CD4-positive, alpha-beta memory T cell (primary cell): ENCODE measurements at regions of chr7 and their contacts with region 1.

Region 1: DNA sequence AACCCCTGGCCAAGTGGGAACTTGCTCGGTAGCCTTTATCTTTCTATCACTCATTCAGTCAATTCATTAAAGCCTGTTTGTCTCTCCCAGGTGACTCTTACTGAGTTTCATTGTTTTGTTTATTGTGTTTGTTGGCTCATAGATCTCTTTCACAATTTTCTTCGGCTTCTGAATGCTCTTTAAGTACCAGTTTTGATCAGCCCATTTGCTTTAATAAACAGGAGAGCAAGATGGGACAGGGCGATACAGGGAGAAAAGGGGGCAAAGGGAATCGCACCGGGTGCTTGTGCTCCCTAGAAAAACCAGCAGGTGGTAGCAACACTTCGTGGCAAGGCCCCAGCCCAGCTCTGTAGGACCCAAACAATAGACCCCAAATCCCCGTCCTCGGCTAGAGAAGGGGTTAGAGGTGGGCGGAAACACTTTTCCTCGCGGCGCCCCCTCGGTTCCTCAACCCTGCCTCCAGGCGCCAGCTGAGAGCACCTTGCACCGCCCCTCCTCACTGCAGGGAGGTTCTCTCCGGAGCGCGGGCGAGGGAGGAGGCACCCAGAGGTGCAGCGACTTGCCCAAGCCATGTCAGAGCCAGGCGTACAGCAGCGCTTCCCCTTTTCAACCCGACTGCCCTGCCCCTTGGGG is 1.0 kb upstream of the EPHB6 start:
- DNase-seq: peak; percentile 63 to 72 (median 71)
- H3K4me3 ChIP-seq: peak overlapping the region; percentile 81 to 90
- H3K4me3 Mint-ChIP-seq: peak overlapping the region; percentile 93 to 98 (median 97)
- H3K27ac ChIP-seq: peak overlapping the region; percentile 27
- H3K27ac Mint-ChIP-seq: peak overlapping the region; percentile 86 to 96 (median 92)
- H3K4me1 ChIP-seq: peaks cover 24% of the 10 kb centered on the region
- H3K4me1 Mint-ChIP-seq: peaks cover 12 to 34% (median 19%) of the 10 kb centered on the region in 4 donors
- H3K27me3 ChIP-seq: no peaks in the 10 kb centered on the region
- H3K27me3 Mint-ChIP-seq: peaks cover 3% of the 10 kb centered on the region in 2 donors

Region 2: GRCh38 chr7:142598297-142598696 is 255.6 kb before region 1 on chr7:
- CTCF ChIA-PET with region 1: no interaction called
- POLR2A ChIA-PET with region 1: no interaction called
- intact Hi-C with region 1: no loop called
- DNase-seq: no peak
- H3K4me3 ChIP-seq: no peak overlapping the region
- H3K4me3 Mint-ChIP-seq: no peak overlapping the region
- H3K27ac ChIP-seq: no peak overlapping the region
- H3K27ac Mint-ChIP-seq: peak overlapping the region in 1 of 7 donors; percentile 62
- H3K4me1 ChIP-seq: no peaks in the 10 kb centered on the region
- H3K4me1 Mint-ChIP-seq: no peaks in the 10 kb centered on the region
- H3K27me3 ChIP-seq: no peaks in the 10 kb centered on the region
- H3K27me3 Mint-ChIP-seq: peaks cover 0 to 2% of the 10 kb centered on the region in 2 donors

Region 3: DNA sequence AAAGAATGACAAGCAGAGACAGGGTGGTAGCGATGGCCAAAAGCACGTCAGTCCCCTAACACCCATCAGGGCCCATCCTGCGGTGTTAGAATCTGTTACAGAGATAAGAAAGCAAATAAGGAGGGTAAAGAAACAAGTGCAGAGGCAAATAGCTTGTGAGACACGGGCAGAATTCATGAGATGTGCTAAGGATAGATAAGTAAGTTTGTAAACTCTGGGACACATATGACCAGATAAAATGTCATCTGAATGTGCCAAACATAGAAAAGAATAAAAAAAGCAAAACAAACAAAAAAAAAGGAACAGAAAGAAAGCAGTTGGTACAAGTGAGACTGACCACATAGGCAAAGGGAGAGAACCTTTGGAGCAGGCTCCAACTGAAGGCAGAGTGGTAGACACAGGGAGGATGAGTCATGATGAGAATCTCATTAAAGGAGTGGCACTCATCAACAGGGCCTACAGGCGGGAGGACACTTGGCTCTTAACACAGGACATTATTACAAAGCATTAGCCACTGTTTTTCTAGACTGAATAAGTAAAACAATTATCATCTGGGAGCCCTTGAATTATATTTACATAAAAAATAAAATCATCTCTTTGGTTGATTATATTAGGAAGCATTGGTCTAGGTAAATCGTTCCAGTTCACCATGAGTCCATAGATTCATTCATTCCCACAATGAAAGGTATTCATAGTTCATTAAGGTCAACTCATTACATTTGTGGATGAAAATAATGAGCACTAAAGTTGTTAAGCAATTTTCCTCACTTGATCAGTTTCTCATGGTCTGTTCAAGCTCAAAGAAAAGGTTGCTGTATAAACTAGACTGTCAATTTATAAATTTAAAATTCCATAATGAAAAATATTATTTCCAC is 20.4 kb before region 1 on chr7:
- CTCF ChIA-PET with region 1: no interaction called
- POLR2A ChIA-PET with region 1: no interaction called
- intact Hi-C with region 1: loop called (anchors 2 kb)
- DNase-seq: no peak
- H3K4me3 ChIP-seq: no peak overlapping the region
- H3K4me3 Mint-ChIP-seq: no peak overlapping the region
- H3K27ac ChIP-seq: no peak overlapping the region
- H3K27ac Mint-ChIP-seq: peak overlapping the region in 2 of 7 donors; percentile 5 to 30
- H3K4me1 ChIP-seq: no peaks in the 10 kb centered on the region
- H3K4me1 Mint-ChIP-seq: peaks cover 6 to 11% (median 6%) of the 10 kb centered on the region in 4 donors
- H3K27me3 ChIP-seq: no peaks in the 10 kb centered on the region
- H3K27me3 Mint-ChIP-seq: no peaks in the 10 kb centered on the region

Region 4: GRCh38 chr7:142866361-142867058 is 12.7 kb after region 1 on chr7:
- CTCF ChIA-PET with region 1: interaction called, 31 read pairs
- POLR2A ChIA-PET with region 1: interaction called, 7 read pairs
- intact Hi-C with region 1: loop called (anchors 1 kb)
- DNase-seq: peak in 1 of 5 donors; percentile 19
- H3K4me3 ChIP-seq: no peak overlapping the region
- H3K4me3 Mint-ChIP-seq: no peak overlapping the region
- H3K27ac ChIP-seq: no peak overlapping the region
- H3K27ac Mint-ChIP-seq: no peak overlapping the region
- H3K4me1 ChIP-seq: no peaks in the 10 kb centered on the region
- H3K4me1 Mint-ChIP-seq: peaks cover 0 to 2% (median 0%) of the 10 kb centered on the region in 4 donors
- H3K27me3 ChIP-seq: no peaks in the 10 kb centered on the region
- H3K27me3 Mint-ChIP-seq: no peaks in the 10 kb centered on the region

Region 5: DNA sequence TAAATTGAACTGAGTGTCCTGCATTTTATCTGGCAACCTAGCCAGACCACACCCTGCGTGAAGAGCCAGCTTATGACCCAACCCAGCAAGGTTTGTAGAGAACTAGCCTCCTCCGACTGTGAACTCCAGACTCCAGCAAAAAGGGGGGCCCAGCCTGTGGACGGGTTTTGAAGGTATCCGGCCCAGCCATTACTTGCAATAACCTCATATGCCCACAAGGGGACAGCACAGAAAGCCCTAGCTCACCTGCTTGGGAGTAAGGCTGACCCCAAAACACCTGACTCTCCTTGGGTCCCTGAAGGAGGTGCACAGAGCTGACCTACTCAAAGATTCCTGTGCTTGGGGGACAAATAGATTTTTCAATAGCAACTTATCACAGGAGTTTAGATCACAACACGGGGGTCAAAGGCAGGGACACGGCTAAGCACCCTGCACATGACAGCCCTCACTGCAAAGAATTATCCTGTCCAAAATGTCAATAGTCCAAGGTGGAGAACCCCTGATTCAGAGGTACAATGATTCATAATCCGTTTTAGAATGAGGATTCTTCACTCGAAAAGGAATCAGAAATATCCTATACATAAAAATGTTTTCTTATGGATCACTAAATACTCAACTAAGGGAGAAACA is 27.1 kb after region 1 on chr7:
- CTCF ChIA-PET with region 1: interaction called, 14 read pairs
- POLR2A ChIA-PET with region 1: interaction called, 3 read pairs
- intact Hi-C with region 1: loop called (anchors 1 kb)
- DNase-seq: peak; percentile 35 to 57 (median 55)
- H3K4me3 ChIP-seq: no peak overlapping the region
- H3K4me3 Mint-ChIP-seq: no peak overlapping the region
- H3K27ac ChIP-seq: no peak overlapping the region
- H3K27ac Mint-ChIP-seq: no peak overlapping the region
- H3K4me1 ChIP-seq: no peaks in the 10 kb centered on the region
- H3K4me1 Mint-ChIP-seq: peaks cover 0 to 4% (median 0%) of the 10 kb centered on the region in 4 donors
- H3K27me3 ChIP-seq: no peaks in the 10 kb centered on the region
- H3K27me3 Mint-ChIP-seq: peaks cover 2 to 8% of the 10 kb centered on the region in 2 donors